Right lobe of liver (tissue), 6 donors: ENCODE measurements at regions of chr20 and their contacts with region 1.

Region 1: DNA sequence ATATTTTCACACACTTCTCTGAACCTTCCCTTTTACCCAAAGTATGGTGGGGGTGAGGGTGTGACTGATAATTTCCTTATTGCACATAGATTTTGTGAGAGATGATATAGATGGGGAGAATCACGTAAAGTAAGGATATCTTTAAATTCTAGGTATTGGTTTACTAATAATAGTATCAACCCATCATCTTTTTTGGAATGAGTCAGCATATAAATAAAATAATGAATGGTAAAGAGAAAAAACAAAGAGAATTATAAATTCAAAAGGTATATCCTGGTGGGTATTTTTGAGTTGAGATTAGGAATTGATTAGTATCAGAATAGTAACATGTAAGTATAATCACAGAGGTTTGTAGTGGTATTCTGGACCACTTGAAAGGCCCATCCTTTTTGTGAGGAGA is 56.1 kb downstream of the MACROD2 start:
- DNase-seq: no peak
- ATAC-seq: no peak
- H3K4me3 ChIP-seq: no peak overlapping the region
- H3K27ac ChIP-seq: no peak overlapping the region
- H3K4me1 ChIP-seq: no peaks in the 10 kb centered on the region
- H3K27me3 ChIP-seq: no peaks in the 10 kb centered on the region
- CTCF ChIP-seq: no peak
- POLR2A ChIP-seq: no peak

Region 2: GRCh38 chr20:13819885-13820645 is 231.4 kb before region 1 on chr20:
- intact Hi-C with region 1: loop called in 1 of 2 experiments (anchors 5 kb)
- DNase-seq: peak in 2 of 3 donors; percentile 22 to 60
- ATAC-seq: peak; percentile 87 to 92 (median 89)
- H3K4me3 ChIP-seq: no peak overlapping the region
- H3K27ac ChIP-seq: peak overlapping the region in 1 of 3 donors; percentile 37
- H3K4me1 ChIP-seq: no peaks in the 10 kb centered on the region
- H3K27me3 ChIP-seq: no peaks in the 10 kb centered on the region
- CTCF ChIP-seq: peak; percentile 63 to 74 (median 68)
- POLR2A ChIP-seq: no peak

Region 3: GRCh38 chr20:13960525-13960924 is 90.9 kb before region 1 on chr20:
- intact Hi-C with region 1: no loop called
- DNase-seq: no peak
- ATAC-seq: no peak
- H3K4me3 ChIP-seq: no peak overlapping the region
- H3K27ac ChIP-seq: no peak overlapping the region
- H3K4me1 ChIP-seq: no peaks in the 10 kb centered on the region
- H3K27me3 ChIP-seq: no peaks in the 10 kb centered on the region
- CTCF ChIP-seq: no peak
- POLR2A ChIP-seq: no peak